ENCODE measurements at regions of chr22 and their contacts with region 1.

Region 1: DNA sequence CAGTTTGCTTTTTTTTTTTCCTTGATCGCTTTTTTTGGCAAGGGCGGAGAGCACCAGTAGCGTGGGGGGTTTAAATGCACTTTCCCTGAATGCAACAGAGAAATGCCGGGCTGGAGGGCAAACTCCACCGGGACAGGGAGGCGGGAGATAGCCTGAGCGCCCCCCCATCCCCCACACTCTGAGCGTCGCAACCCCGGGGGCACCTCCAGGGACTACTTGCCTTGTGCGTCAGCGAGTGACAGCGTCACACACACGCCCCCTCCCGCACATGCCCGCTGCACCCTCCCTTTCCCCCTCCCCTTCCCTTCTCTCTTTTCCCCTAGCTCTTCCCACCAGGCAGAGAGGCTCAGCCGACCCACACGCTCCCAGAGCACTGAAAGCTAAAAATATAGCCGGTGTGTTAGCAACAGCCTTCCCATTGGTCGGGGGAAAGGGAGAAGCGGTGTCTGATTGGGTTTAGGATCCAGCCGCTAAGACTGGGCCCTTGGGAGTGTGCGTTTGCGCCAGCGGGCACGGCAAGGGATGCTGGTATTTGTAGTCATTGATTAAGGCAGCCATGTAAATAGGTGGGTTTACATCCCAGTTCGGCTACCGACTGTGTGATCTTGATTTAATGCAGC is 1.7 kb upstream of the TOB2 start:
- H3K4me3 Mint-ChIP-seq: peak overlapping the region; percentile 100
- H3K27ac Mint-ChIP-seq: peak overlapping the region; percentile 99
- H3K4me1 Mint-ChIP-seq: peaks cover 12% of the 10 kb centered on the region
- H3K27me3 Mint-ChIP-seq: no peaks in the 10 kb centered on the region

Region 2: DNA sequence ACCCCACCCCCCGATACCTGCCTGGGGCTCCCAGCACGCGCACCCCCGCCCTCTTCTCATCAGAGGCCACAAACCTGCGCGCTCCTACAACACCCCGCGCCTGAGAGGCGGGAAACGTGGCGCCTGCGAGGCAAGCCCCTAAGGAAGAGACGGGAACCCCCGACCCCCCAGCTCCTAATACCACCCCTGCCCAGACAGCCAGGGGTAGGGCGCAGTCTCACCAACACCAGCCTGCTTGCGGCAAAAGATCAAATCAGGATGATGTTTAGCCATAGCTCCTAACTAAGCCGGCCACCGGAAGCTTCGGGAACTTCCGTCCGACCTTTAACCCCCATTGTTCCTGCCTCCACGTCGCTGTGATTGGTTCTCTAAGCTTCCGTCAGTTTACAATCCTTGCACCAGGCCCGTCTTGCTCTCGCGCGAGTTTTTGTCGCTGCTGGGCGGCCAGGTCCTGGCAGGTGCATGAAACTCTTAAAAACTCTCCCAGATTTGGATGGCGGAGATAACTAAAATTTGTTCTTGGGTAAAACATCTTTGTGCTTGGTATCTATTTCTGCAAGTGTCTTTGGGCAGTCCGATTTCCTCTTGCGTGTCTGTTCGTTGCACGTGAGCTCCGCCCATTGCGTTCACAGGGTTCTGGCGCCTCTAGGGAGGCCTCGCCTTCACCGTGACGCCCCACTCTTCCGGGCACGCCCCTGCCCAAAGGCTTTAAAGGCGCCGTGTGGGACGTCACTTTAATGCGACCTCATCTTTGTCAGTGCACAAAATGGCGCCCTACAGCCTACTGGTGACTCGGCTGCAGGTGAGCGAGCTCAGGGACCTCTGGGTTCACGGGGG is 20.3 kb after region 1 on chr22 and contains the starts of genes ACO2 and PHF5A:
- intact Hi-C with region 1: loop called (anchors 1 kb)
- H3K4me3 Mint-ChIP-seq: peak within 1 kb of the TSS; percentile 97
- H3K27ac Mint-ChIP-seq: peak within 1 kb of the TSS; percentile 99
- H3K4me1 Mint-ChIP-seq: peaks cover 25% of the 10 kb centered on the region
- H3K27me3 Mint-ChIP-seq: no peaks in the 10 kb centered on the region

Region 3: DNA sequence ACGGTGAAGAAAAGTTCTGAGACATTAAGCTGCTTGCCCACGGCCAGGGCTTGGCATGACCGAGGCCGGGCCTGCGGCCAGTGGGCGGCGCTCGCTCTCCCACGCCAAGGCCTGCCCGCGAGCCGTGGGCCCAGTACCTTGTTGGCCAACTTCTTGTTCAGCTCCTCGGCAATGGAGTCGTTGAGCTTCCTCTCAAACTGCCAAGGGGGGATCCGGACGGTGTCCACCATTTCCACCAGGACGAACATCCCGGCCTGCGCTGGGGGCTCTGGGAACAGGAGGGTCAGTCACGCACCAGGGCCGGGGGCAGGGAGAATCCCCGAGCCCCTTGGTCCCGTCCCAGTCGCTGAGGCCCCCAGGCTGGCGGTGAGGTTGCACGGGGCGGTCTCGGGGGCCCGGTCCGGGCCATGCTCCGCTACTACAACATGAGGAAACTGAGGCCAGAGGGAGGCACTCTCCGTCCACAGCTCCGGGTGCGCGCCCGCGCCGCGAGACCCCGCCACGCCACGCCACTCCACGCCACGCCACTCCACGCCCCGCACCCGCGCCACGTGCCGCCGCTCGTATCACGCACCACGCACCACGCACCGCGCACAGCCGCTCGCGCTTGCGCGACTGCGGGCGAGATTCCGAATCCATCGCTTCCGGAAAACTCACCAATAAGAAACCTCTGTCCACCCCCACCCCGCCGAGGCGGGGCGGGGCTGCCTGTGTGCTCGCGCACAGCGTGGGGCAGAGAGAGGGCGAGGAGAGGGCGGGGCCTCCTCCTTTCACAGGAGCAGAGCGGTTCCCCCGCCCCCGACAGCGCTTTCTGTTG is 95.8 kb after region 1 on chr22 and contains the start of gene POLR3H:
- intact Hi-C with region 1: no loop called
- H3K4me3 Mint-ChIP-seq: peak within 1 kb of the TSS; percentile 90
- H3K27ac Mint-ChIP-seq: peak within 1 kb of the TSS; percentile 89
- H3K4me1 Mint-ChIP-seq: peaks cover 44% of the 10 kb centered on the region
- H3K27me3 Mint-ChIP-seq: peaks cover 5% of the 10 kb centered on the region

Region 4: DNA sequence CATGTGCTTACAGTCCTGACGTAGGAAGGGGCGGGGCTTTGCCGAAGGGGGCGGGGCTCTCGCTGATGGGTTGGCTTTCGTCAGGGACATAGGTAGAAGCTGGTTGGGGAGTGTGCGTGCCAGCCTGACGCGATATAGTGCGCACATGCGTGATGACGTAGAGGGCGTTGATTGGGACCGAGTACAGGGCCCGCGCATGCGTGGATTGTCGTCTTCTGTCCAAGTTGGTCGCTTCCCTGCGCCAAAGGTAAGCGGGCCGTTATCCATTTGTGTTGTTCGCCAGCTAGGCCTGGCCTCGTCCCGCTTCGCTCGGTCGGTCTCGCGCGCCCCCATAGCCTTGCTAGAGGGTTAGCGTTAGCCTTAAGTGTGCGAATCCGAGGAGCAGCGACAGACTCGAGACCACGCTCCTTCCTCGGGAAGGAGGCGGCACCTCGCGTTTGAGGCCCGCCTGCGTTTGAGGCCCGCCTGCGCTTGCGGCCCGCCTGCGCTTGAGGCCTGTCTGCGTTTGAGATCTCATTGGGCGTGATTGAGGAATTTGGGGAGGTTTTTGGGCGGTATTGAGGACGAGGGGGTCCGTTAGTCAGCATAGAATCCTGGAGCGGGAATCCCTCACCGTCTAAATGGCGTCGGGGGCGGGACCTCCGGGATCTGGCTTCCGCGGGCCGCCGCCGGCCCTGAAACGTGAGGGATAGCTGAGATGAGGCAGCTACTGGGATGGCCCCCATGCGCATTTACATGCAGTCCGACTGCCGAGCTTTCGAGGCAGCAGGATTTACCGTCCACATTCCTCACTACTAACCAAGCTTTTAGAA is 173.0 kb after region 1 on chr22 and contains the start of gene XRCC6:
- intact Hi-C with region 1: loop called (anchors 1 kb)
- H3K4me3 Mint-ChIP-seq: peak within 1 kb of the TSS; percentile 92
- H3K27ac Mint-ChIP-seq: peak within 1 kb of the TSS; percentile 94
- H3K4me1 Mint-ChIP-seq: peaks cover 39% of the 10 kb centered on the region
- H3K27me3 Mint-ChIP-seq: no peaks in the 10 kb centered on the region